HepG2 (cell line): ENCODE measurements at regions of chr7 and their contacts with region 1.

Region 1: DNA sequence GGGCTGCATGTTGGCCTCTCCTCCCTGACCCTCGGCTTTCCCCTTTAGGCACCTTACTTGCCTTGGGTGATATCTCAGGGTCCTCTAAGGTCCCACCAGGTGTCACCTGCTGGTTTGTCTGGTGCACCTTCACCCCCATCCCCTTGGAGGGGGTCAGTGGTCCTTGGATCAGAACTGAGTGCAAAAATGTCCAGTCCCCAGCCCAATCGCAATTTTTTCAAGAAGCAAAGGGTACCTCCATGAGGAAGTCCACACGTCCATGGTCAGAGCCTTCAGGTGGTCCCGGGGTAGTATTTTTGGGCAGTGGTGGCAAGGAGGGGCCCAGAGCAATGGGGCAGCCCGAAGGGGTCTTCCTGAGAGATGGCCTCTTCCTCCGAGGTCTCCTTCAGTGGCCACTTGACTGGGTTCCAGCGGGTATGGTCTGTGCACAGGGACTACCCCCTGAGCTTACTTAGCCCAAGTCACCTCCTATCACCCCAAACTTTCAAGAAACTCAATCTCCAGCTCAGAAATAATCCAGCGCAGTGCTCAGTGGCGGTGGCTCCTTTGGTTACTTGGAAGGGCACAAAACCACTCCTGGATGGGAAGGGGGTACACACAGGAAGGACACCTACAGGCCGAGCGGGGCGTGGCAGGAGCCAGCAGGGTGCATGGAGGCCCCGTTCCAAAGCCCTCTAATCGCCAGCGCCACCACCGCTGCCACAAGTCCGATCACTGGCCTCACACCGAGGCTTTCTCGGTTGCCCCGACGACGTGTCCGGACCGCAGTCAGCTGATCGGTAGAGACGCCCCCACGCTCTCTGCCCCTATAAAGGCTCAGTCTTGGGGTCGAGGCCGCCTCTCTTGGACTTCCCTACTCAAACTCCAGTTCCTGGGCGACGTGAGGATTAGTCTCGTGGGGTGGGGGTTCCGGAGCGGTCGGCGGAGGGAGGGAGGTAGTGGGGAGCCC is 4.5 kb downstream of the SAP25 start:
- DNase-seq: peak; percentile 91
- ATAC-seq: peak; percentile 37
- H3K4me3 ChIP-seq: peak overlapping the region; percentile 0 to 62 (median 31); a peak in 4 of 6 replicates
- H3K27ac ChIP-seq: peak overlapping the region; percentile 99
- H3K4me1 ChIP-seq: peaks cover 91% of the 10 kb centered on the region
- H3K27me3 ChIP-seq: no peaks in the 10 kb centered on the region
- CTCF ChIP-seq: peak; percentile 90
- EP300 ChIP-seq: 0 out of 4 replicates have a peak, but pooled peaks of 1 of the 2 experiments have one; percentile 30
- POLR2A ChIP-seq: peak in 1 of 2 experiments; percentile 53; a peak in 2 of 4 replicates
- RAD21 ChIP-seq: peak; percentile 54; the same call in 1 of the 2 replicates

Region 2: DNA sequence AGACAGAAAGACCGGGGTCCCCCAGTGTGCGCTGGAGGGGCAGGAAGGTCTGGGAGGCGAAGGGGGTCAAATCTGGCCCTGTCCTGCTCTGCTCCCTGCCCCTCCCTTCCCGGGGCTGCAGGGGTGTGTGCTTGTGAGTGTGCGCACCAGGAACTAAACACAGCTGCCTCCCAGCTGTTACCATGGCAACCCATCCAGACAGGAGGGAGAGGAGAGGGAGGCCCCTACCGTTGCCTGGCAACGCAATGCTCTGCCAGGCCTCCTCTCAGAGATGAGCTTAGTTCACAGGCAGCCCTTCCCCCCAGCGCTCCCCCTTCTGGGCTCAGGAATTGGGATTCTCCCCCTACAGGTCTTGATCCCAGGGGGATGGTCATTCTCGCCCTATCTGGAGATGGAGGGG is 79.3 kb before region 1 on chr7:
- CTCF ChIA-PET with region 1: no interaction called
- POLR2A ChIA-PET with region 1: interaction called, 3 read pairs
- in situ Hi-C with region 1: loop called (anchors 5 kb)
- intact Hi-C with region 1: no loop called
- DNase-seq: peak; percentile 89
- ATAC-seq: peak; percentile 42
- H3K4me3 ChIP-seq: no peak overlapping the region
- H3K27ac ChIP-seq: no peak overlapping the region
- H3K4me1 ChIP-seq: peaks cover 60% of the 10 kb centered on the region
- H3K27me3 ChIP-seq: peaks cover 1 to 31% of the 10 kb centered on the region in 2 experiments
- CTCF ChIP-seq: no peak
- EP300 ChIP-seq: no peak
- POLR2A ChIP-seq: no peak
- RAD21 ChIP-seq: no peak

Region 3: GRCh38 chr7:100538654-100539435 is 30.3 kb before region 1 on chr7 and contains the start of gene AGFG2:
- CTCF ChIA-PET with region 1: no interaction called
- POLR2A ChIA-PET with region 1: interaction called, 12 read pairs
- in situ Hi-C with region 1: no loop called
- intact Hi-C with region 1: no loop called
- DNase-seq: peak; percentile 99
- ATAC-seq: peak; percentile 94
- H3K4me3 ChIP-seq: peak within 1 kb of the TSS; percentile 93 to 98 (median 96)
- H3K27ac ChIP-seq: peak within 1 kb of the TSS; percentile 96
- H3K4me1 ChIP-seq: peaks cover 55% of the 10 kb centered on the region
- H3K27me3 ChIP-seq: no peaks in the 10 kb centered on the region; a peak in 1 of 5 replicates
- CTCF ChIP-seq: no peak
- EP300 ChIP-seq: no peak
- POLR2A ChIP-seq: peak in 1 of 2 experiments; percentile 93; a peak in 3 of 4 replicates
- RAD21 ChIP-seq: peak; percentile 28; the same call in 1 of the 2 replicates
- total RNA-seq, gene AGFG2: 117 and 132 TPM in 2 replicates

Region 4: DNA sequence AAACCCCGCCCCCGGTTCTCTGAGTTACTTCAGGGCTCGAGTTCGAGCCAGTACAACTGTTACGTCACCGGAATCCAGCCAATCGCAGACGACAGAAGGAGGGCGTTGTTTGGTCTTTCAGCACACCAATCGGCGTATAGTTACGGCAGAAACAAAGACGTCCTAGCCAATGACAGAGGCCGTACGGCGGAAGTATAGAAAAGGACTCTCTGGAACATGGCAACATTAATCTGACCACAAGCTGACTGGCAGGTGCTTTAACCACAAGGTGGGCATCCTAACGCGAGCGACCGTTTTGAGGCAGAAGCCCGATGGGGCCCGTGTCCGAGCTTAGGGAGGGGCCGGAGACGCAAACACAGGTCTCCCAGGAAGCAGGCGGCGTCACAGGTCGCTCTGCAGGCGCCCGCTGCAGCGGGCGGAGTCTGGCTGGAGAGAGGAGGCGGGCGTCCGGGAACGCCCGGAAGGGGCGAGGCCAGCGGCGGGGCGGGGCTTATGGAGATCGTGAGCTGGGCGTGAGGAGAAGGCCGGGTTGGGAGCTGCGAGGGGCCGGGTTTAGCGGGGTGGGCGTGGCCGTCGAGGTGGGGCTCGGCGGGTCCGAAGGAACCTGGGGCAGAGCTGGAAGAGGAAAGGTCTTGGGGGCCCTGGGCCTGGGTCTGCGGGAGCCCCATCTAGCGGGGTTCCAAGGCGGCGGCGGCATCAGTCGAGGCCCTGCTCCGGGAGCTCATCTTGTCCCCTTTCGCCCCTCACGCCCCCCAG is 43.0 kb after region 1 on chr7 and contains the start of gene MOSPD3:
- CTCF ChIA-PET with region 1: no interaction called
- POLR2A ChIA-PET with region 1: interaction called, 13 read pairs
- in situ Hi-C with region 1: no loop called
- intact Hi-C with region 1: no loop called
- DNase-seq: peak; percentile 99
- ATAC-seq: peak; percentile 94
- H3K4me3 ChIP-seq: peak within 1 kb of the TSS; percentile 61 to 81 (median 77)
- H3K27ac ChIP-seq: peak within 1 kb of the TSS; percentile 95
- H3K4me1 ChIP-seq: peaks cover 29% of the 10 kb centered on the region
- H3K27me3 ChIP-seq: no peaks in the 10 kb centered on the region
- CTCF ChIP-seq: no peak
- EP300 ChIP-seq: no peak
- POLR2A ChIP-seq: peak; percentile 60 to 78
- RAD21 ChIP-seq: no peak
- total RNA-seq, gene MOSPD3: 6.1 and 7.6 TPM in 2 replicates